Uterus (tissue), 4 donors: ENCODE measurements at regions of chr2 and their contacts with region 1.

Region 1: DNA sequence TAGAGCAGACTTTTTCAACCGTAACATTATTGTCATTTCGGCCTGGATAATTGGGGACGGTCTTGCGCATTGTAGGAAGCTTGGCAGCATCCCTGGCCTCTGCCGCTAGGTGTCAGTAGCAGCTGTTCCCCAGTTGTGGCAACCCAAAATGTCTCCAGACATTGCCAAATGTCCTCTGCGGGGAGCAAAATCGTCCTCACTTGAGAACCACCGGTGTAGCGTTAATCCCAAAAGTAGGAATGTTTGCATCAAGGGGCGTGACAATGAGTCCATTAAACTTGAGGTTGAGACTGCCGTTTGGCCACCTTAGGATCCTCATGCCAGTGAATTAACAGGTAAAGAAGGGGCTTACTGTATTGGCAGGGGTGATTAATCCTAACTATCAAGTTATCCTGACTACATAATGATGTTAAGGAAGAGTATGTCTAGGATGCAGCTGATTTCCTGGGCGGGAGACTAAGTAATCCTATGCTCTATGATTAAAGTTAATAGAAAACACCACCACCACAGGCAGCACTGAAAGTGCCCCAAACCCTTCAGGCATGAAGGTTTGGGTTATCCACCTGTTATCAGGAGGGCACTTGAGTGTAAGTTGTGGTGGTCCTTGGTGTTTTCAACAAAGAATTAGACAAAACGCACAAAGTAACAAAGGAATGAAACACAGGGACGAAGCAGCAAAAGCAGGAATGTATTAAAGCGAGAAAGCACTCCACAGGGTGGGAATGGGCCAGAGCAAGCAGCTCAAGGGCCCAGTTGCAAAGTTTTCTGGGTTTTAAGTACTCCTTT is 4.9 kb upstream of the ZC3H8 start:
- DNase-seq: peak; percentile 83 to 85
- H3K4me3 ChIP-seq: no peak overlapping the region
- H3K27ac ChIP-seq: no peak overlapping the region
- H3K4me1 ChIP-seq: no peaks in the 10 kb centered on the region
- H3K27me3 ChIP-seq: no peaks in the 10 kb centered on the region
- CTCF ChIP-seq: peak; percentile 83 to 91 (median 91)
- POLR2A ChIP-seq: no peak

Region 2: GRCh38 chr2:112433932-112434730 is 174.4 kb after region 1 on chr2:
- intact Hi-C with region 1: loop called (anchors 10 kb)
- DNase-seq: peak in 1 of 2 donors; percentile 18
- H3K4me3 ChIP-seq: no peak overlapping the region
- H3K27ac ChIP-seq: peak overlapping the region in 1 of 2 donors; percentile 6
- H3K4me1 ChIP-seq: no peaks in the 10 kb centered on the region
- H3K27me3 ChIP-seq: no peaks in the 10 kb centered on the region
- CTCF ChIP-seq: no peak
- POLR2A ChIP-seq: no peak